ENCODE measurements at regions of chr20 and their contacts with region 1.

Region 1: GRCh38 chr20:57391074-57391554 is at the start of gene RBM38:
- DNase-seq: peak; percentile 64 to 87
- ATAC-seq: peak; percentile 58 to 82 (median 60)
- H3K4me3 ChIP-seq: peak within 1 kb of the TSS; percentile 81
- H3K4me3 Mint-ChIP-seq: peak within 1 kb of the TSS; percentile 95
- H3K27ac ChIP-seq: peak within 1 kb of the TSS; percentile 97
- H3K27ac Mint-ChIP-seq: peak within 1 kb of the TSS; percentile 92 to 95
- H3K4me1 ChIP-seq: peaks cover 64% of the 10 kb centered on the region
- H3K4me1 Mint-ChIP-seq: peaks cover 29 to 46% of the 10 kb centered on the region in 2 donors
- H3K27me3 ChIP-seq: no peaks in the 10 kb centered on the region
- H3K27me3 Mint-ChIP-seq: no peaks in the 10 kb centered on the region
- CTCF ChIP-seq: no peak
- total RNA-seq, gene RBM38: 217 to 392 (median 264) TPM

Region 2: GRCh38 chr20:57190363-57191264 is 200.5 kb before region 1 on chr20:
- intact Hi-C with region 1: no loop called
- DNase-seq: no peak
- ATAC-seq: no peak
- H3K4me3 ChIP-seq: no peak overlapping the region
- H3K4me3 Mint-ChIP-seq: no peak overlapping the region
- H3K27ac ChIP-seq: no peak overlapping the region
- H3K27ac Mint-ChIP-seq: no peak overlapping the region
- H3K4me1 ChIP-seq: no peaks in the 10 kb centered on the region
- H3K4me1 Mint-ChIP-seq: no peaks in the 10 kb centered on the region
- H3K27me3 ChIP-seq: no peaks in the 10 kb centered on the region
- H3K27me3 Mint-ChIP-seq: peaks cover 0 to 2% of the 10 kb centered on the region in 2 donors
- CTCF ChIP-seq: no peak

Region 3: GRCh38 chr20:57407541-57407956 is 16.4 kb after region 1 on chr20:
- intact Hi-C with region 1: loop called (anchors 2 kb)
- DNase-seq: peak; percentile 44 to 52
- ATAC-seq: peak; percentile 44 to 59 (median 52)
- H3K4me3 ChIP-seq: no peak overlapping the region
- H3K4me3 Mint-ChIP-seq: peak overlapping the region; percentile 62
- H3K27ac ChIP-seq: no peak overlapping the region
- H3K27ac Mint-ChIP-seq: peak overlapping the region; percentile 79 to 84
- H3K4me1 ChIP-seq: peaks cover 81% of the 10 kb centered on the region
- H3K4me1 Mint-ChIP-seq: peaks cover 49 to 87% of the 10 kb centered on the region in 2 donors
- H3K27me3 ChIP-seq: no peaks in the 10 kb centered on the region
- H3K27me3 Mint-ChIP-seq: no peaks in the 10 kb centered on the region
- CTCF ChIP-seq: no peak

Region 4: GRCh38 chr20:57473246-57474048 is 82.3 kb after region 1 on chr20:
- intact Hi-C with region 1: loop called (anchors 5 kb)
- DNase-seq: peak; percentile 44 to 52
- ATAC-seq: peak; percentile 87 to 94 (median 91)
- H3K4me3 ChIP-seq: no peak overlapping the region
- H3K4me3 Mint-ChIP-seq: peak overlapping the region; percentile 60
- H3K27ac ChIP-seq: peak overlapping the region; percentile 17
- H3K27ac Mint-ChIP-seq: peak overlapping the region; percentile 74 to 87
- H3K4me1 ChIP-seq: peaks cover 61% of the 10 kb centered on the region
- H3K4me1 Mint-ChIP-seq: peaks cover 33 to 50% of the 10 kb centered on the region in 2 donors
- H3K27me3 ChIP-seq: no peaks in the 10 kb centered on the region
- H3K27me3 Mint-ChIP-seq: peaks cover 0 to 8% of the 10 kb centered on the region in 2 donors
- CTCF ChIP-seq: no peak

Region 5: GRCh38 chr20:57573890-57574289 is 182.8 kb after region 1 on chr20:
- intact Hi-C with region 1: no loop called
- DNase-seq: no peak
- ATAC-seq: no peak
- H3K4me3 ChIP-seq: no peak overlapping the region
- H3K4me3 Mint-ChIP-seq: no peak overlapping the region
- H3K27ac ChIP-seq: no peak overlapping the region
- H3K27ac Mint-ChIP-seq: no peak overlapping the region
- H3K4me1 ChIP-seq: no peaks in the 10 kb centered on the region
- H3K4me1 Mint-ChIP-seq: no peaks in the 10 kb centered on the region
- H3K27me3 ChIP-seq: no peaks in the 10 kb centered on the region
- H3K27me3 Mint-ChIP-seq: peaks cover 8 to 11% of the 10 kb centered on the region in 2 donors
- CTCF ChIP-seq: no peak

Region 6: DNA sequence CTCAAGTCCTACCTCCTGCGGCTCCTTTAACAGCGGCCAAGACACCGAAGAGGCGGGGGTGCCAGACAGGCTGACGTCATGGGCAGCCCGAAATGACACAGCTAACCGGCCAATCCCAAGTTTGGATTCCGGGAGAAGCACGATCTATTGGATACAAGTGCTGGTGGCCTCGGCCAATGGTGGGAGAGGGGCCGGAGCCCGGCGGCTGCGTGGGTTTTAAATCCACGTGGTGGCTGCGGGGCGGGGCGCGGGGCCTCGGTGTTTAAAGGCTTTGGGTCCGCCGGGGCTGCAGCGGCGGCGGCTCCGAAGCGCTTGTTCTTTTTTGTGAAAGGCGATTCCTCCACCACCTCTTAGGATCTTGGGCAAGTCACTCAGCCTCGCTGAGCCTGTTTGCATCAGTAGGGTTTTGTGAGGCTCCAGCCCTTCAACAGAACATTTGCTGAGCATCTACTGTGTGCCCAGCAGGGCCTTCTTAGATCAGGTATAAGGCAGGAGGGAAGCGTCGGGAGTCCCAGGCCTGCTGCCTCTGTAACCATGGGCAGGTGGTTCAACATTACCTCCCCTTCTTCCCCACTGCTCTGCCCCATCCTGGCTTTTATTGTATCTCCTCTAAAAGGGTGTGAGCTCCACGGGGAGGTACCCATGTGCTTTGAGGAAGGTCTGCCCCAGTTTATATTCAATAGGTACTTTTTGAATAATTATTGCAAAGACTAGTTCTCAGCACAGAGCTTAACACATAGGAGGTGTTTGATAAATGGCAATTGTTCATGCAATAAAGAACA is 327.6 kb after region 1 on chr20:
- intact Hi-C with region 1: loop called (anchors 10 kb)
- DNase-seq: peak; percentile 89 to 95
- ATAC-seq: peak; percentile 98 to 99 (median 99)
- H3K4me3 ChIP-seq: peak overlapping the region; percentile 5
- H3K4me3 Mint-ChIP-seq: peak overlapping the region; percentile 60
- H3K27ac ChIP-seq: peak overlapping the region; percentile 4
- H3K27ac Mint-ChIP-seq: peak overlapping the region; percentile 68 to 86
- H3K4me1 ChIP-seq: peaks cover 12% of the 10 kb centered on the region
- H3K4me1 Mint-ChIP-seq: peaks cover 5 to 8% of the 10 kb centered on the region in 2 donors
- H3K27me3 ChIP-seq: no peaks in the 10 kb centered on the region
- H3K27me3 Mint-ChIP-seq: peaks cover 16 to 36% of the 10 kb centered on the region in 2 donors
- CTCF ChIP-seq: no peak

Region 7: DNA sequence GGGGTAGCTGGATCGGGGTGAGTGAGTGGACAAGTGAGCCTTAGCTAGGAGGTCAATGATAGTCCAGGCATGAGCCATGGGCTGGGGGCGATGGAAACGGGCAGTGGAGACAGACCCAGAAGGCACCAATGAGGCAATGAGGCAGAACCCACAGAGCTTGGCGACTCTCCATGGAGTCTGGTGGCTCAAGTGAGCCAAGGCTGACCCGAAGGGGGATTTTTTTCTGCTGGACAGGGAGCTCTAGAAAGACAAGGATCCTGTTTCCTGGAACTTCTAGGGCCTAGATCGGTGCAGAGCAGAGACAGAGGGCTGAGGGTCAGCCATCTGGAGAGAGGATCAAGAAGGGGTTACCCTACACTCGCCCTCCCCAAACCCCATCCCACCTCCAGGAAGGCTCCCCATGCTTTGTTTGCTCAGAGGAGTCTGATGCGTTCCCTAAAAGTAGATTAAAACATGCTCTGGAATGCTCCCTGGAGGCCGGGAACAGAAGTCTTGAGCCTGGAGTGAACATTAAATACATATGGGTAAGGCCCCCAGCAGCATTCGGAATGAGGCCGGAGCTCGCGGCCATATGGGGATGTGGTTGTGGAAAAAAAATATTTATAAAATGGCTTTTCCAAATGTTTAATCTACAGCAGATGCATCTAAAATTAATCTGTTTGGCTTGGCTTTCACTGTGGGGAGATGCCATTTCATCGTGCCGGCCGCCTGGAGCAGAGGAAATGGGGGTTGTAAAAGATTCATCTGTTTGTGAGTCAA is 556.5 kb after region 1 on chr20:
- intact Hi-C with region 1: no loop called
- DNase-seq: no peak
- ATAC-seq: no peak
- H3K4me3 ChIP-seq: no peak overlapping the region
- H3K4me3 Mint-ChIP-seq: no peak overlapping the region
- H3K27ac ChIP-seq: no peak overlapping the region
- H3K27ac Mint-ChIP-seq: no peak overlapping the region
- H3K4me1 ChIP-seq: no peaks in the 10 kb centered on the region
- H3K4me1 Mint-ChIP-seq: peaks cover 0 to 4% of the 10 kb centered on the region in 2 donors
- H3K27me3 ChIP-seq: no peaks in the 10 kb centered on the region
- H3K27me3 Mint-ChIP-seq: peaks cover 0 to 3% of the 10 kb centered on the region in 2 donors
- CTCF ChIP-seq: no peak

Region 8: DNA sequence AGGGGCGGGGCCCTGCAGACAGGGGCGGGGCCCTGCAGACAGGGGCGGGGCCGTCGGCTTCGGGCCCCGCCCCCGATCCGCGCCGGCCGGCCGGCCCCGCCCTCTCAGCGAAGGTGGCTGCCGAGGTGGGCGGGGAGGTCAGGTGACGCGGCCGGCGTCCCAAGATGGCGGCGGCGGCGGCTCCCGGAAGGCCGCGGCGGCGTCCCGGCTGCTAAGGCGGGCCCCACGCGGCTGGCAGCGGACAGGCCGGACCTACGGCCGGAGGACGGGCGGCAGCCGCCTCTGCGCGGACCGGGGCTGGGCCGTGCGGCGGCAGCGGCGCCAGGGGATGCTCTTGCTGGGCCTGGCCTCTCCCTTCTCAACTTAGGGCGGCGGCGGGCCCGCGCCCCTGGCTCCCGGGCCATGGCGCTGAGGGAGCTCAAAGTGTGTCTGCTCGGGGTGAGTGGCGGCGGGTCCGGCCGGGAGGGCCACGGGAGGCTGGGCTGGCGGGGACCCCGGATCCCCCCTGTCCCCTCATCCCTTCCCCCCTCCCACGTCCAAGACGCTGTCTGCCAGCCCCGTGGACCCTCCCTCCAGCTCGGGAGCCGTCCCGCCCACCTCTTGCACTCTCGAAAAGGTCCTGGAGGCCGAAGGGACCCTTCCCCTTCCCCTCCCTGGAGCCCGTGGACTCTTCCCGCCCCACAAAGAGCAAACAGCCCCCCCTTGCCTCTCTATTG is 918.6 kb after region 1 on chr20 and contains the start of gene RAB22A:
- intact Hi-C with region 1: loop called (anchors 2 kb)
- DNase-seq: peak; percentile 85 to 93
- ATAC-seq: peak; percentile 68 to 89 (median 73)
- H3K4me3 ChIP-seq: peak within 1 kb of the TSS; percentile 77
- H3K4me3 Mint-ChIP-seq: peak within 1 kb of the TSS; percentile 83
- H3K27ac ChIP-seq: peak within 1 kb of the TSS; percentile 87
- H3K27ac Mint-ChIP-seq: peak within 1 kb of the TSS; percentile 93 to 94
- H3K4me1 ChIP-seq: peaks cover 53% of the 10 kb centered on the region
- H3K4me1 Mint-ChIP-seq: peaks cover 45 to 48% of the 10 kb centered on the region in 2 donors
- H3K27me3 ChIP-seq: no peaks in the 10 kb centered on the region
- H3K27me3 Mint-ChIP-seq: no peaks in the 10 kb centered on the region
- CTCF ChIP-seq: no peak
- total RNA-seq, gene RAB22A: 19.6 to 29.8 (median 28.6) TPM

Measured in natural killer cell (primary cell).